Heart right ventricle (tissue), 16 donors: ENCODE measurements at regions of chr17 and their contacts with region 1.

Region 1: GRCh38 chr17:7825206-7825990 is 8.6 kb upstream of the KDM6B start:
- DNase-seq: no peak
- ATAC-seq: peak in 1 of 8 donors; percentile 20
- H3K4me3 ChIP-seq: no peak overlapping the region
- H3K27ac ChIP-seq: no peak overlapping the region
- H3K4me1 ChIP-seq: peaks cover 0 to 7% (median 0%) of the 10 kb centered on the region in 9 donors
- H3K27me3 ChIP-seq: peaks cover 0 to 5% (median 0%) of the 10 kb centered on the region in 7 donors
- CTCF ChIP-seq: peak in 4 of 9 donors; percentile 23 to 29 (median 26)

Region 2: DNA sequence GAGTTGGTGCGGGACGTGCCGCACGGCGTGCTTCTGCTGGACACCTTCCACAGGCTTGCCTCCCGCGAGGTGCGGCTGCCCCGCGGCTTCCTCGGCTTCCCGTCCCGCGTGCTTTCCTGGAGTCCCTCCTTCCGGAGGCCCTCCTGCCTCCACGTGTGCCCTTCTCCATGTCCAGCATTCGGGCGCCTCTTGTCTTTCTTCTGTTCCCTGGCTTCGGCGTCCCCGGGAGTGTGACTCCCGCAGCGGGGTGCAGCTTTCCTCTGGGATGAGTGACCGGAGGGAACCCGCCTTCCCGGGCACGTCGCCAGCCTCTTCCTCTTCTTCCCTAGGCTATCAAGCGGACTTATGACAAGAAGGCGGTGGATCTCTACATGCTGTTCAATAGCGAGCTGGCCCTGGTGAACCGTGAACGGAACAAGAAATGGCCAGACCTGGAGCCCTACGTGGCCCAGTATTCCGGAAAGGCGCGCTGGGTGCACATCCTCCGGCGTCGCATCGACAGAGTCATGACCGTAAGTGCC is 84.9 kb before region 1 on chr17:
- intact Hi-C with region 1: loop called in 4 of 10 experiments (anchors 5 to 10 kb)
- DNase-seq: peak in 1 of 2 donors; percentile 27
- ATAC-seq: peak in 2 of 8 donors; percentile 13 to 43
- H3K4me3 ChIP-seq: peak overlapping the region in 6 of 10 donors; percentile 7 to 41 (median 22)
- H3K27ac ChIP-seq: no peak overlapping the region
- H3K4me1 ChIP-seq: peaks cover 0 to 15% (median 0%) of the 10 kb centered on the region in 9 donors
- H3K27me3 ChIP-seq: peaks cover 0 to 31% (median 14%) of the 10 kb centered on the region in 7 donors
- CTCF ChIP-seq: no peak

Region 3: GRCh38 chr17:7851438-7852256 is 26.2 kb after region 1 on chr17:
- intact Hi-C with region 1: loop called in 7 of 10 experiments (anchors 1 to 5 kb)
- DNase-seq: peak; percentile 91
- ATAC-seq: peak; percentile 62 to 75 (median 70)
- H3K4me3 ChIP-seq: peak overlapping the region in 5 of 10 donors; percentile 5 to 42 (median 19)
- H3K27ac ChIP-seq: peak overlapping the region in 5 of 10 donors; percentile 4 to 49 (median 17)
- H3K4me1 ChIP-seq: peaks cover 3 to 49% (median 30%) of the 10 kb centered on the region in 9 donors
- H3K27me3 ChIP-seq: no peaks in the 10 kb centered on the region
- CTCF ChIP-seq: peak; percentile 96 to 99 (median 98)

Region 4: DNA sequence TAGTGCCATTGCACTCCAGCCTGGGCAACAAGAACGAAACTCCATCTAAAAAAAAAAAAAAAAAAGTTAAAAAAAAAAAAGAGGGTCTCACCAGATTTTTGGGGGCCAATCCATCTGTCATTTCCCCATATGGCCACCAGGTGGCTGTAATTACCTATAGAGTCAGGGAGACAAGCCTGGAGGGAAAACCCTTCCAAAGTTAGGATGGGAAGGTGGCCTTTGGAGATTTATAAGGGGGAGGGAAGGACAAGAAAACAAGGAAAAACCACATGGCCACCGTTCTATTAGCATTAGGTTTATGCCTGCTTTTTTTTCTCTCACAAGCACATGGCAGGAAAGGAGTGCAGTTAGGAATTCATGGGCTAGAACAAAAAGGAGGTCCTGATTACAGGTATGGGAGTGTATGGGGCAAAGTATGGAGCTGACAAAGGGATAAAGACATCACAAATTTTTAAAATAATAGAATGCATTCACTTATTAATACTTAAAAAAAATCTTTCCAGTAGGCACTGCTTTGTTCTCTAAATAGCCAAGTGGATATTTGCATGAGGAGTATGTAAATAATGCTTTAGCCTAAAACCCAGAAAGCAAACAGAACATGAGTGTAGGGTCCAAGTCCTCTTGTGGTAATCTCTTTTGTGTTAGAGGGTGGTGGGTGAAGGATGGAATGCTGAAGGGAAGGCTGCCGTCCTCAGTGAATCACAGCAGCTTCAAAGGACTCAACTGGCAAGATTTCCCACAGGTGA is 37.5 kb after region 1 on chr17:
- intact Hi-C with region 1: loop called in 3 of 10 experiments (anchors 5 kb)
- DNase-seq: peak in 1 of 2 donors; percentile 62
- ATAC-seq: no peak
- H3K4me3 ChIP-seq: no peak overlapping the region
- H3K27ac ChIP-seq: no peak overlapping the region
- H3K4me1 ChIP-seq: peaks cover 0 to 26% (median 14%) of the 10 kb centered on the region in 9 donors
- H3K27me3 ChIP-seq: no peaks in the 10 kb centered on the region
- CTCF ChIP-seq: peak; percentile 65 to 83 (median 81)

Region 5: GRCh38 chr17:7873051-7873450 is 47.7 kb after region 1 on chr17:
- intact Hi-C with region 1: no loop called
- DNase-seq: no peak
- ATAC-seq: no peak
- H3K4me3 ChIP-seq: no peak overlapping the region
- H3K27ac ChIP-seq: no peak overlapping the region
- H3K4me1 ChIP-seq: peaks cover 0 to 10% (median 0%) of the 10 kb centered on the region in 9 donors
- H3K27me3 ChIP-seq: no peaks in the 10 kb centered on the region
- CTCF ChIP-seq: no peak

Region 6: DNA sequence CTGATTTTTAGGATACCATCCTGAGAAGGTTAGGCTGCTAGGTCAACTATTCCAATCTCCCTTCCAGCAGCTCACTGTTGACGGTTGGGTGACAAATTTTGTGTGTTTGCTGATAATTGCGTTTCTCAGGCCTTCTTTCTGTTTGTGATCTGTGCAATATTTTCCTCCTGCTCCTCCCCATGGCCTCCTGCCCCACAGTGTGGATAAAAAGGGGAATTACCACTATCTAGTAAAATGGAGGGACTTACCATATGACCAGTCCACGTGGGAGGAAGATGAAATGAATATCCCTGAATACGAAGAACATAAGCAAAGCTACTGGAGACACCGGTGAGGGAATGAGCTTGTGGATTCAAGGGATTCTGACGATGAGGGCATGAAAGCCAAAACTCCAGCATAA is 72.4 kb after region 1 on chr17:
- intact Hi-C with region 1: loop called in 5 of 10 experiments (anchors 2 to 10 kb)
- DNase-seq: no peak
- ATAC-seq: peak in 7 of 8 donors; percentile 63 to 86 (median 74)
- H3K4me3 ChIP-seq: no peak overlapping the region
- H3K27ac ChIP-seq: peak overlapping the region in 1 of 10 donors; percentile 1
- H3K4me1 ChIP-seq: peaks cover 0 to 9% (median 0%) of the 10 kb centered on the region in 9 donors
- H3K27me3 ChIP-seq: no peaks in the 10 kb centered on the region
- CTCF ChIP-seq: peak; percentile 20 to 63 (median 52)